Endothelial cell of umbilical vein (primary cell): ENCODE measurements at regions of chr10 and their contacts with region 1.

Region 1: DNA sequence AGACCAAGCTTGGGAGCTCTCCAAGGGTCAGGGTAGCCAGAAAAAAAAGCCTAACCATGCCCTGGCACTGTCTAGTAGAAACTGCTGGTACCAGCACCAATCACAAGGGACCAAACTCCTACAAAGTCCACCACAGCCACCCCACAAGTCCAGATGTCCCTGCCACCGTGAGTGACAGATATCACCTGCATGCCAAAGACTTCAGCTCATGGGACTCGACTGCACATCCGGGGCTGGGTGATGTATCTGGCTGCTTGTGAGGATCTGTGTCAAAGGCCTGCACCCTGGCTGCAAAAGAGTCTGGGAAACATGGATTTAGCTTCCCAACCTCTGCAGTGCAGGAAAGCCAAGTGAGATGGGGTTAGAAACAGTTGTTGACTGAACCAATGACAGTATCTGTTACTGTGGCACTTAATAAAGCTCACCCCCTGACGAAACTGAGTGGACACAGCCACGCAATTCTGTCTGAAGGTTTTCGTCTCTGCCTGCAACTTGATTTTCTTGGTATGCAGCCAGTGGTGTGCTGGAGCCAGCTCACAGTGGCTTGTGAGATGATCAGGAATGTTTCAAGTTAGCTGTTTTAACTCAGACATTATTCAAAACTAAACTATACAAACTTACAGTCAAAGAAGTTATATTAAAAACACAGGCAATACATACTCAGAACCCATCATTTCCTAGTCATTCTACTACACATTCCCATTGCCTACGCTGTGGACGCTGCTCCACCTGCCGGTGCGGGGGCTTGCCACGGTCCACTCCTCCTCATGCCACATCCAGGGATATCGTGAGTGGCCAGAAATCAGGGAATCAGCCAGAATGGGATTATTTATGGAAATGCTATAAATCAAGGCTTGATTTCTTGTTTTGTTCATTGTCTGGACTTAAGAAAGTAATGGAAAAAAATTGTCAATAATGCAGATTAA is 9.2 kb downstream of the ZNF488 start:
- DNase-seq: no peak
- H3K4me3 ChIP-seq: no peak overlapping the region
- H3K27ac ChIP-seq: no peak overlapping the region
- H3K4me1 ChIP-seq: no peaks in the 10 kb centered on the region
- H3K27me3 ChIP-seq: peaks cover 10 to 12% of the 10 kb centered on the region in 2 experiments
- CTCF ChIP-seq: no peak
- POLR2A ChIP-seq: no peak

Region 2: DNA sequence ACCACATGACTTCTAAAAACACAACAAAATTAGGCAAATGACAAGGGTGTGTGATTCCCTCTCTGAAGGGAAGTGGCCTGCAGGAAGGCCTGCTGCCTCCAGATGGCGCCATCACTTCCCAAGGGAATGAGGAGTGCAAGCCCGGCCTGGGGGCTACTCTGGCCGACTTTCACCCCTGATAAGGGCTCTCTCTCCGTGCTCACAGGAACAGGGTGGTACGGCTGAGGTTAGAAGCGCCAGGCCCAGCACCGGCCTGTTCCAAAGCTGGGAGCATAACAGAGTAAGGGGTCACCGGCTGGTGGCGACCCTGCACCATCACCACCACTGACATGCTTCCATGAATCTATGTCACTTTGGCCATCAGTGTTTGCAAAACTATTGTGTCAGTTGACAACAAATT is 13.6 kb before region 1 on chr10:
- CTCF ChIA-PET with region 1: interaction called, 10 read pairs
- POLR2A ChIA-PET with region 1: no interaction called
- dilution Hi-C with region 1: no loop called
- intact Hi-C with region 1: no loop called
- DNase-seq: peak; percentile 45
- H3K4me3 ChIP-seq: no peak overlapping the region
- H3K27ac ChIP-seq: no peak overlapping the region
- H3K4me1 ChIP-seq: no peaks in the 10 kb centered on the region
- H3K27me3 ChIP-seq: no peaks in the 10 kb centered on the region
- CTCF ChIP-seq: peak; percentile 86
- POLR2A ChIP-seq: no peak